Cardiac septum (tissue), 1 donor: ENCODE measurements at regions of chr22 and their contacts with region 1.

Region 1: GRCh38 chr22:33920927-33921524 is 750 bp upstream of the LARGE1 start:
- DNase-seq: peak; percentile 97

Region 2: GRCh38 chr22:33302049-33302545 is 618.9 kb before region 1 on chr22:
- intact Hi-C with region 1: loop called (anchors 2 kb)
- DNase-seq: peak; percentile 88

Region 3: DNA sequence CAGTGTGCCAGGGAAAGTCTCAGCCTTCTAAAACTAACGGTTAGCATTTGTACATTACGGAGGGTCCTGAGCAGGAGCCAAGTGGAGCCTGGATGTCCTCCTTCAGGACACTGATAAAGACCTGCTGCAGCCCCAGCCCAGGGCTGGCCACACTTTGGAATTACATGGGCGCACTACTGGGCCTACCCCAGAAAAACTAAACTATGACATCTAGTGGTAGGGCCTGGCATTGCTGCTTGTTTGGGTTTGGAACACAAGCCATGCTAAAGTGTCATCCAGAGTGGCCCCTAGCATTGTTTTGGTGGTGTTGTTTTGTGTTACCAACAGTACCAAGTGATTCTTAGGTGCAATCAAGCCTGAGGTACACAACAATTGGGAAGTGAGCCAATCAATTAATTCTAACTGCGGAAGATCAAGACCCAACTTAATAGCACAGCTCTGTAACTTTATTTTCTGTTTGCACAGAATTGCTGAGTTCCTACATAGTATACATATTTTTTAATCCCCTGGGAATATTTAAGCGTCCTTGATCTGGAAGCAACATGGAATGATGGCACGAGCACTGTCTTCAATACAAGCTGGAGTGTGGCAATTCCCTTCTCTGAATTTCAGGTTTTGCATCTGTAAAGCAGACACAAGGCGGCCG is 341.5 kb before region 1 on chr22:
- intact Hi-C with region 1: loop called (anchors 10 kb)
- DNase-seq: peak; percentile 78

Region 4: GRCh38 chr22:33756508-33756949 is 164.5 kb before region 1 on chr22:
- intact Hi-C with region 1: loop called (anchors 2 kb)
- DNase-seq: no peak

Region 5: DNA sequence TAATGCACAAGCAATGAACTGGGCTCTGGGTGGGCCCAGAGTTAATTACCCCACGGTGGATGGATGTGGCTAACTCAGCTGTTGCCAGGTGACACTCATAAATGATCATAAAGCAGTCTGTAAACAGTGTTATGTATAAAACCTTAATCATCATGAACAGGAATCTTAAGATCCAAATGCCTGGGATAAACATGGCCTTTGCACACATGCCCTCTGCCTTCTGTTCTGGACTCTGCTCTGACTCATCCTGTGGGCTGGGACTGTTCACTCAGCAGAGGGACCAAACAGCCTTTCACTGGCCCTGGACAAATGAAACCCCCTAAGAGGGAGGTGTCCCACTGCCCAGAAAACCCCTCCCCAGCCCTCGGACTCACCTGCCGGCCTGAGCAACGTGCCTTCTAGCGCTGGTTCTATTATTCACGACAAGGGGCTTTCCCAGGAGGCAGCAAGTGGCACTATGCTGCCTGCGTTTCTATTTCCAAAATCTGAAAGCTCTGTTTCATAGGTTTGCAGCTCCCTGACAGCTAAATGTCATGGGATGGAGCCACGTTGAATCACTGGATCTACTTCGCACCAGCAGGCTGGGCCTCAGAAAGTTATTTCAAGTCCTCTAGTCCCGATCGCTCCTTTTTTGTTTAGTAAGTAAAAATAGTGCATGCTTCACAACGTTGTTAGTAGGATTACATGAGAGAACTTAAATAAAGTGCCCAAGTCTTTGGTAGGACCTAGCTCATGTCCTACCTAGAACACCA is 53.7 kb before region 1 on chr22:
- intact Hi-C with region 1: loop called (anchors 2 kb)
- DNase-seq: no peak

Region 6: DNA sequence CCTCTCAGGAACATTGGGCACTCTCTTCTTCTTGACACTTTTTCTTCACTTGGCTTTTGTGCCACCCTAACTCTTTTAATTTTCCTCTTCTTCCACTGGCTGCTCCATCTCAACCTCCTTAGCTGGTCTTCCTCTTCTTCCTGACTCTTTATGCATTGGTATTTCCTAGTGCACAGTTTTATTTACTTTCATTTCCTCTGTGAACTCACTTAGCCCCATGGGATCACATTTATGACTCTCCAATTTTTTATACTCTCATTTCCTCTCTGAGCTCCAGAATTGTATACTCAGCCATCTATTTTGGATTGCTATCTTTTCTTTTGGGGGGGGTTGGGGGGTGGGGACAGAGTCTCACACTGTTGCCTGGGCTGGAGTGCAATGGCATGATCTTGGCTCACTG is 37.7 kb after region 1 on chr22:
- intact Hi-C with region 1: no loop called
- DNase-seq: no peak

Region 7: GRCh38 chr22:33971561-33971961 is 50.5 kb after region 1 on chr22:
- intact Hi-C with region 1: no loop called
- DNase-seq: no peak

Region 8: GRCh38 chr22:33983558-33983957 is 62.5 kb after region 1 on chr22:
- intact Hi-C with region 1: no loop called
- DNase-seq: no peak

Region 9: DNA sequence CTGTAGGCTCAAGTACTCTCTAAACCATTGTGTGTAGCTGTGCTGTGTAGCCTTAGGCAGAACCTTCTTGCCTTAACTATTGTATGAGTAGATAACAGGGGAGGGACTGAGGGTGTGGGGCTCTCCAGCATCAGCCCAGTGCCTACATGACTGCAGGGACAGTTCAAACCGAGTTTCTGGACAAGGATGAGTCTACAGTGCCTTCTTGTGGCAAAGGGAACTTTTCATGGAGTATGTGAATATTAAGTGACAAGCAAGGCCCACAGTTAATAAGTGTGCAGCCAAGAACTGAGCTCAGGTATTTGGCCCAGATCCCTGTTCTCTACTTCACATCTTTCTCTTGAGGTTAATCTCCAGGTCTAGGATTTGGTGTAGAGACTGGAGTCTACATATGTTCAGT is 423.7 kb after region 1 on chr22:
- intact Hi-C with region 1: loop called (anchors 10 kb)
- DNase-seq: no peak